PC-3 (cell line): ENCODE measurements at regions of chr11 and their contacts with region 1.

Region 1: GRCh38 chr11:93537767-93538261 is 5.4 kb downstream of the SMCO4 start:
- DNase-seq: peak; percentile 21
- ATAC-seq: no peak
- H3K4me3 ChIP-seq: no peak overlapping the region
- H3K27ac ChIP-seq: no peak overlapping the region
- H3K4me1 ChIP-seq: peaks cover 9% of the 10 kb centered on the region
- H3K27me3 ChIP-seq: no peaks in the 10 kb centered on the region
- CTCF ChIP-seq: no peak

Region 2: GRCh38 chr11:93248602-93249001 is 289.2 kb before region 1 on chr11:
- CTCF ChIA-PET with region 1: interaction called, 10 read pairs
- POLR2A ChIA-PET with region 1: no interaction called
- intact Hi-C with region 1: no loop called
- DNase-seq: peak; percentile 39
- ATAC-seq: peak; percentile 38; the same call in 1 of the 2 replicates
- H3K4me3 ChIP-seq: no peak overlapping the region
- H3K27ac ChIP-seq: no peak overlapping the region
- H3K4me1 ChIP-seq: no peaks in the 10 kb centered on the region
- H3K27me3 ChIP-seq: no peaks in the 10 kb centered on the region
- CTCF ChIP-seq: peak; percentile 67

Region 3: DNA sequence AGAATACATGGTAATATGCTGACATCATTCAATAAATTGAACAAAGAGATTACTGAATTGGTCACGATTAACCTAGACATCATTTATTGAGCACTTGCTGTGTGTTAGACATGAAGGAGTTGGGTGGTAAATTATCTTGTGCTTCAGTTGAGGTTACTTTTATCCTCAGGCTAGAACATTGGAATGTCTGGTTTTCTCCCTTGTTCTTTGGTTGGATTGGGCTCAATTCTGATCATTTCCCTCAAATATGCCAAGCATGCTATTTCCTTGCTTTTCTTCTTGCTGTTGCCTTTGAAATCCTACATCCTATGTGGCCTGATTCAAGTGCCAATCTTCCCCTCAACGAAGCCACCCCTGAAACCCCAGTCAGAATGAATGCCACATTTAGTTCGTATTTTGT is 141.5 kb before region 1 on chr11:
- CTCF ChIA-PET with region 1: no interaction called
- POLR2A ChIA-PET with region 1: no interaction called
- intact Hi-C with region 1: no loop called
- DNase-seq: no peak
- ATAC-seq: no peak
- H3K4me3 ChIP-seq: no peak overlapping the region
- H3K27ac ChIP-seq: no peak overlapping the region
- H3K4me1 ChIP-seq: no peaks in the 10 kb centered on the region
- H3K27me3 ChIP-seq: no peaks in the 10 kb centered on the region
- CTCF ChIP-seq: no peak